ENCODE measurements at regions of chr4 and their contacts with region 1.

Region 1: DNA sequence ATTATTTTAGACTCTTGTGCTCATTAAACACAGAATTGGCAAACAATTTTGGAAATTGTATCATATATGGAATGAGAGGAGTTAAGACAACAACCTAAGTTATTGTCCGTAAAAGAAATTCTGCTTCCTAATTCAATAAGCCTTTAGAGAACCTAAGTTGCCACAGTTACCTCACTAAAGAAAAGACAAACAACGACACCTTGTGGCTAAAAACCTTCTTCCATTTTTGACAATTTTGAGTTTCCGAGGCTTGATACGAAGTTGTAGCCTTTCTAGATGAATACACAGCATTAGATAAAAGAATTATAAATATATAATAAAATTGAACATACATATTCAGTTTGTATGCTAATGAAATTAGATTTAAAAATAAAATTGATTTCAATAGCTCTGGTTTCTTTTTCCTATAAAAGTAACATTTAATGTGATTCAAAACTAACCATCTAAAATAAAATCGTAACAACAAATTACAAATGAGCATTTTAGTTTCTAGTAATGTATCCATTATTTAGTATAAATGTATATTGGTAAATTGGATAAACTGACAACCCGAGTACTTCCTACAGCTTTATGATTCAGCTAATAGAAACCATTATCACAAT is 275.1 kb downstream of the GPM6A start:
- DNase-seq: no peak

Region 2: DNA sequence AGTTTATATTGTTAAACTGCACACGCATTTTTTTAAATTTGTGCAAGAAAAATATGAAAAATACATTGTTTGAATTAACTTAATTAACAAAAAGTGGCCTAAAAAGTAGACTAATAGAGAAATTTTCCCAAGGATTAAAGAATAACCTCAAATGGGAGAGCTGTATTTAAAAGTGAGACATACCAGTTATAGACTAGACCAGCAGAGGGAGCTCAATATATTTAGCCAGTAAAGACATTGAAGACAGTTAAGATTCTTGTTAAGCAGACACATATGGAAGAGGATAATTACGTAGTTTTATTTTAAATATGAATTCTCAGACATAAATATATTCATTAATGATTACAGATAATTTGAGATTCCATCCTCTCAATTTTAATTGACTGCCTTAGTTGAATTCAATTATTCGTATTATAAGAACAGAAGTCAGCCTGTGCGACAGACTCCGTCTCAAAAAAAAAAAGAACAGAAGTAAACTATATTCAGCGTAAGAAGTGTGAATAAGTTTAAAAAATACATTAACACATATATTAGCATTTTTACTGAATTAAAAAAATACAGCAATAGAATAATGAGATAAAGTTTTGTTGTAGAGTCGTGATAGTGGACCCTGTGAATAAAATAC is 772.7 kb before region 1 on chr4:
- intact Hi-C with region 1: loop called (anchors 5 kb)
- DNase-seq: no peak

Region 3: DNA sequence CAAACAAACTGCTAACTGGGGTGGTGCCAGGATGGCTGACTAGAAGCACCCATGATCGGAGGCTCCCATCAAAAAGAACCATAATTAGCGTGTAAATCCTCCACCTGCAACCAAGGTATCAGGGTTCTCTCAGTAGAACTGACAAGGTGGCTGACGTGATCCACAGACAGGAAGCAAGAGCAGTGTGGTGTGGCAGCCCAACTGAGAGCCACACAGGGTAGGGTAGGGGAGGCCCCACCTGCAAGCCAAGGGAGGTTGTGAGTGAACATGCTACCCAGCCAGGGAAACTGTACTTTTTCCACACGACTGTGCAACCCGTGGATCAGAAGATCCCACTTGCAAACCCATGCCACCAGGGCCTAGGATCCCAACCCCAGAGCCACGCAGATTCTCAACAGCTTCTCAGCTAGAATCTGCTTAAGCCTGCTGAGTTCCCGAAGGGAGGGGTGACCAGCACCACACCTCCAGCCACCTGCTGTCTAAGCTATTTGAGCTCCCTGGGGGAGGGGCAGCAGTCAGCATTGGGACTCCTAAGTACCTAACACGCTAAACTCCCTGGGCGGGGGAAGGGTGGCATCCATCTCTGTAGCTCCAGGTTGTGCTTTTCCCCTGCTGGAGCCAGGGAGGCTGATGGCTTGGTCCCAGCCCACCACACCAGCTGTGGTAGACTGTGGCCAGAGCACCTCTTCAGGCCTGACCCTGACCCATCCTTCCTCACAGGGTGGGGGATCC is 150.0 kb before region 1 on chr4:
- intact Hi-C with region 1: no loop called
- DNase-seq: no peak

Region 4: DNA sequence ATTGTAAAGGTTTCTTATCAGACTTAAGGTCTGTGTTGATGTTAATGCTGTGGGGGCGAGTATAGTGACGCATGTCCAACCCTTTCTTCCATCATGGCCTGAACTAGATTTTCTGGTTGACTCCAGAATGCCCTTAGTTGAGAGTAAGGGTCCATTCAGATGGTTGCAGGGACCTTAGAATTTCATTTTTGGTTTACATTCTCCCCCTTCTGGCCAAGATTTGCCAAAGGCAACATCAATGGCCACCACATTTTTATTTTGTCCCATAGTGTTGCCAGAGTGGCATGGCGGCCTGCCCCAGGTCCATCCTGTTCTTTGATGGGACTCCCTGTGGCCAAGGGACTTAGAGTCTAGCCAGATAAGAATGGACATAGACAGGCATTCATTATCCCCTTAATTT is 93.4 kb before region 1 on chr4:
- intact Hi-C with region 1: no loop called
- DNase-seq: no peak

Region 5: DNA sequence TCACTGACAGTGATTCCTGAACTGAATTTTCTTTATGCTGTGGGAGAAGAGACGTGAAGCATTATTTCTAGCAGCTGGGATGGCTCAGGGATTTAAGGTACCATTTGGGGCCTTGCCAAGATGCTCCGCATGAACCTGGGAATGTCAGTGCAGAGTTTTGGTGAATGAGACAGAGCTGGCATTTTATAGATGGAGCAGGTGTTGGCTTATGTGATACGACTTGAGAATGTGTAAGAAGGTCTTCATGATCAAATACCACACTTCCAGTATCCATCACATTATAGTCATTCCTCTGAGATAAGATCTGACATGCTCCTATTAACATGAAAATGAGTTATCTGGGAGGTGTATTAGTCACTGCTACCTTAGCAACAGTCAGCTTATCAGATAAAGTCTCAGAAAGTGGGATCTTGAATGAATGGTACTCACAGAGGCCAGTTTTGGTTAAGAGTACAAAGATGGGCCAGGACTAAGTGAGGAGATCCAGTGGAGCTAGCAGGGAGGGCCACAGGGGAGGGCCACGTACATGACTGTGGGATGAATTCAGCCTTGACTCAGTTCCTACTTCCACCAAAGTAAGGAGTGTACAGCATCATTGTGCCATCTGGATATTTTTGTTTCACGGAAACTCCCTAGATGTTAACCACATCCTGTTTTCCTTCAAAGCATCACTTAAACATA is 899.5 kb after region 1 on chr4:
- intact Hi-C with region 1: no loop called
- DNase-seq: no peak

Measured in cardiac septum (tissue), 1 donor.